ENCODE measurements at regions of chr6 and their contacts with region 1.

Region 1: DNA sequence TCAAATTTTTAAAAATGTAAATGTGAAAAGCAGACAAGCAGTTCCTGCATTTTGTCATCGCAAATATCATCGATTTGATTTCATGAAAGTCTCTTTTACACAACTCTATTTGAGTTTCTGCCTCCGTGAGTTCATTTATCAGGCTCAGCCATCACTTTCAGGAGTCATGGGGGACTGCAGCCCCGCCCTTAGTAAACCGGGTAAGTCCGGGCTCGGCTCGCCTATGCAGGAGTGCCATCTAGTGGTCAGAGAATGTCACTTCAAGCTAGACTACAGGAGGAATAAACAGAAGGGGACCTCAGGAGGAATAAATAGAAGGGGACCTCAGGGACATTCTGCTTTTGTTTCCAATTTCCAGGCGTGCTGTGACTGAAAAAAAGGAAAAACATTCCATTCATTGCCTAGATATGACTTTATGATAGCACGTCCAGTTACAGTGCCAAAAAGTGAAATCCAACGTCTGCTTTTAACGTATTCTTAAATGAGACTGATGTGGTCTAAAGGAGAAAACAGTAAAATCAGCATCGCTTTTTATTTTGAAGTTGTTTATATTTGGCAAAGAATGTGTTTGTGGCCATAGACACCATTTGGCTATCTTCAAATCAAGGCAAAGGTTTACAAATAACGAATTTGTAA is 333.9 kb downstream of the HACE1 start:
- DNase-seq: peak; percentile 55
- H3K4me3 ChIP-seq: peak overlapping the region; percentile 47
- H3K27ac ChIP-seq: no peak overlapping the region
- H3K4me1 ChIP-seq: peaks cover 13% of the 10 kb centered on the region
- H3K27me3 ChIP-seq: peaks cover 4% of the 10 kb centered on the region
- CTCF ChIP-seq: peak; percentile 94

Region 2: GRCh38 chr6:104143757-104144156 is 382.0 kb before region 1 on chr6:
- intact Hi-C with region 1: no loop called
- DNase-seq: no peak
- H3K4me3 ChIP-seq: no peak overlapping the region
- H3K27ac ChIP-seq: no peak overlapping the region
- H3K4me1 ChIP-seq: no peaks in the 10 kb centered on the region
- H3K27me3 ChIP-seq: no peaks in the 10 kb centered on the region
- CTCF ChIP-seq: no peak

Region 3: GRCh38 chr6:104771258-104771832 is 245.6 kb after region 1 on chr6:
- intact Hi-C with region 1: loop called (anchors 10 kb)
- DNase-seq: no peak
- H3K4me3 ChIP-seq: no peak overlapping the region
- H3K27ac ChIP-seq: no peak overlapping the region
- H3K4me1 ChIP-seq: no peaks in the 10 kb centered on the region
- H3K27me3 ChIP-seq: no peaks in the 10 kb centered on the region
- CTCF ChIP-seq: peak; percentile 70

Measured in left ventricle myocardium inferior (tissue), 1 donor.